Activated B cell treated with CpG ODN at 0.5 μM for 24 hours (primary cell): ENCODE measurements at regions of chr1 and their contacts with region 1.

Region 1: GRCh38 chr1:11681071-11681771 is at the start of gene MAD2L2:
- DNase-seq: peak; percentile 93
- ATAC-seq: peak; percentile 90
- H3K4me3 Mint-ChIP-seq: peak within 1 kb of the TSS; percentile 92
- H3K27ac Mint-ChIP-seq: peak within 1 kb of the TSS; percentile 88
- H3K4me1 Mint-ChIP-seq: peaks cover 22% of the 10 kb centered on the region
- H3K27me3 Mint-ChIP-seq: no peaks in the 10 kb centered on the region
- CTCF ChIP-seq: no peak
- total RNA-seq, gene MAD2L2: 34.4 and 34.9 TPM in 2 replicates

Region 2: GRCh38 chr1:11272832-11273594 is 408.2 kb before region 1 on chr1 and contains the start of gene UBIAD1:
- CTCF ChIA-PET with region 1: no interaction called
- POLR2A ChIA-PET with region 1: no interaction called
- intact Hi-C with region 1: loop called (anchors 2 kb)
- DNase-seq: peak; percentile 80
- ATAC-seq: peak; percentile 86
- H3K4me3 Mint-ChIP-seq: peak within 1 kb of the TSS; percentile 93
- H3K27ac Mint-ChIP-seq: peak within 1 kb of the TSS; percentile 96
- H3K4me1 Mint-ChIP-seq: peaks cover 35% of the 10 kb centered on the region
- H3K27me3 Mint-ChIP-seq: no peaks in the 10 kb centered on the region
- CTCF ChIP-seq: no peak
- total RNA-seq, gene UBIAD1: 23.3 and 27.8 TPM in 2 replicates

Region 3: DNA sequence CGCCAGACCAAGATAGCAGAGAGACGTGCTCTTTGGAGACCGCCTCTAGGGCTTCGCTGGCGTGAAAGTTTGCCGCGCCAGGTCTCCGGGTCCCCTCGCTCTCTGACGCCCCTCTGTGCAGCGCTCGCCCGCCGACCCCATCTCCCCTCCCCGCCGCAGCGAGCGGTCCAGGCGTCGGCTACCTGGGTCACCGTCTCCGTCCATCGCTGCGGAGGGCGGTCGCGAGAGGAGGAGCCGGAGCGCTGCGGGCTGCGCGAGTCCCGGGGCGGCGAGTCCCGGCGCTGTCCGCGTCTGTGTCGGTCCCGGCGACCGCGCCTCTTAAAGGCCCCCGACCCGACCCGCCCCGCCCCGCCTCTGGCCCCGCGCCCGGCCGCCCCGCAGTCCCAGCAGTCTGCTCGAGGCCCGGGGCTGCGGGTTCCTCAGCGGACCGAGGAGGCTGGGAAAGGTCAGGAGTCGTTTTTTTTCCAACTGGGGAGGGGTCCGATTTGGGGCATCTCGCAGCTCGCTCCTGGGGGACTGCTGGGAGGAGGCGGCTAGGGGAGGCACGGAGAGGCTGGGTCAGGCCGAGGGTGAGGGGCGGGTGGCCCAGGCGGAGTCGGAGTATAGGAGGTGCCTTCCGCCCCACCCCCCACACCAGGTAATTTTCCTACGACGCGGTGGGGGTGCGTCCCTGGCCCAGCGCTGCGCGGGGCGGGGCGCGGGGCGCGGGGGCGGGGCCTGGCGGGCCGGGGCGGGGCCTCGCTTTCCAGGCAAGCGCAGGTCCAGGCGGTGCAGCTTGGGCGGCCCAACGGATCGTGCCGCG is 26.9 kb before region 1 on chr1 and contains the starts of genes FBXO2 and FBXO44:
- CTCF ChIA-PET with region 1: no interaction called
- POLR2A ChIA-PET with region 1: interaction called, 8 read pairs
- intact Hi-C with region 1: loop called (anchors 1 kb)
- DNase-seq: peak; percentile 60
- ATAC-seq: peak; percentile 85
- H3K4me3 Mint-ChIP-seq: peak within 1 kb of the TSS; percentile 80
- H3K27ac Mint-ChIP-seq: no peak within 1 kb of the TSS
- H3K4me1 Mint-ChIP-seq: peaks cover 29% of the 10 kb centered on the region
- H3K27me3 Mint-ChIP-seq: no peaks in the 10 kb centered on the region
- CTCF ChIP-seq: no peak
- total RNA-seq, gene FBXO2: 4.2 and 4.6 TPM in 2 replicates
- total RNA-seq, gene FBXO44: 27.2 and 29.9 TPM in 2 replicates

Region 4: GRCh38 chr1:11661103-11661502 is 20.1 kb before region 1 on chr1:
- CTCF ChIA-PET with region 1: interaction called, 12 read pairs
- POLR2A ChIA-PET with region 1: interaction called, 34 read pairs
- intact Hi-C with region 1: loop called (anchors 1 kb)
- DNase-seq: no peak
- ATAC-seq: no peak
- H3K4me3 Mint-ChIP-seq: no peak overlapping the region
- H3K27ac Mint-ChIP-seq: no peak overlapping the region
- H3K4me1 Mint-ChIP-seq: no peaks in the 10 kb centered on the region
- H3K27me3 Mint-ChIP-seq: no peaks in the 10 kb centered on the region
- CTCF ChIP-seq: no peak

Region 5: DNA sequence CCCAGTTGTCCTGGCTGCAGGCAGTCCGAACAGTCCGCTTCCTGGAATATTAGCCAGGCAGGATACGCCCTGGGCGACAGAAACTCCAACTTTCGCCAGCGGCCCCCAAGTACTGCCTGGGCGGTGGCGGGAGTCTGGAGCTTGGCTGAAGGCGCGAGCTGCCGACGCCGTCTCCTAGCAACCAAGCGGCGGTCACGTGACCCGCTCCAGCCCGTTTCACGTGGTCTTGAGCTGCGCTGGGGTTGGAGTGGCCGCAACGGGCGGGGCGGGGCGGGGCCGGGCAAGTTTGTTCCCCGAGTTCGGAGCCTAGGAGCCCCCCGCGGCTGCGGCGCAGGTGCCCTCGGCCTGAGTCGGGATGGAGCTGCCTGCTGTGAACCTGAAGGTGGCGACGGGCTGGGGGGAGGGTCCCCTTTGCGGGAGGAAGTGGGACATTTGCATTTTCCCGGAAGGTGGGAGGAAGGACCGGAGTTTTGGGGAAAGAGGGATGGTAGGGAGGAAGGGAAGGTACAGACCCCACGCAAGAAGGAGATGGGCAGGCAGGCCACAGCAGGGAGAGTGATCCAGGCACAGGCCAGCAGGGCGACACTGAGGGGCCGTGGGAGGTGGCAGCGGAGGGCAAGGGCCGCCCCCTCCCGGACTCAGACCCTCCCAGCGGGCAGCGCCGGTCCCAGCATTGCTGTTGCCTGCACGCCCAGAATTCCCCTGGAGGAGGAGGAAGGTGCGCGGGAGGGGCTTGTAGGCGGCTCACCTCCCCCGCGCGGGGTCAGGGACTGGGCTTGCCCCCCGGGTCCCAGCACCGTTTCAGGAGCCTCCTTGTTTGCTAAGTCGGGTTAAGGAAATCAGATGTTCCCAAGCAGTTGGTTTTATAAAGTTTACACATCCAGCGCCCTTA is 54.9 kb after region 1 on chr1 and contains the start of gene AGTRAP:
- CTCF ChIA-PET with region 1: no interaction called
- POLR2A ChIA-PET with region 1: interaction called, 5 read pairs
- intact Hi-C with region 1: loop called (anchors 2 kb)
- DNase-seq: peak; percentile 80
- ATAC-seq: peak; percentile 88
- H3K4me3 Mint-ChIP-seq: peak within 1 kb of the TSS; percentile 93
- H3K27ac Mint-ChIP-seq: peak within 1 kb of the TSS; percentile 79
- H3K4me1 Mint-ChIP-seq: peaks cover 40% of the 10 kb centered on the region
- H3K27me3 Mint-ChIP-seq: no peaks in the 10 kb centered on the region
- CTCF ChIP-seq: no peak
- total RNA-seq, gene AGTRAP: 10.9 and 13.9 TPM in 2 replicates

Region 6: GRCh38 chr1:11979028-11979850 is 298.0 kb after region 1 on chr1:
- CTCF ChIA-PET with region 1: no interaction called
- POLR2A ChIA-PET with region 1: no interaction called
- intact Hi-C with region 1: no loop called
- DNase-seq: no peak
- ATAC-seq: no peak
- H3K4me3 Mint-ChIP-seq: peak overlapping the region; percentile 90
- H3K27ac Mint-ChIP-seq: peak overlapping the region; percentile 84
- H3K4me1 Mint-ChIP-seq: peaks cover 34% of the 10 kb centered on the region
- H3K27me3 Mint-ChIP-seq: no peaks in the 10 kb centered on the region
- CTCF ChIP-seq: no peak

Region 7: GRCh38 chr1:12244078-12244477 is 562.9 kb after region 1 on chr1:
- CTCF ChIA-PET with region 1: no interaction called
- POLR2A ChIA-PET with region 1: no interaction called
- intact Hi-C with region 1: no loop called
- DNase-seq: no peak
- ATAC-seq: no peak
- H3K4me3 Mint-ChIP-seq: no peak overlapping the region
- H3K27ac Mint-ChIP-seq: no peak overlapping the region
- H3K4me1 Mint-ChIP-seq: no peaks in the 10 kb centered on the region
- H3K27me3 Mint-ChIP-seq: no peaks in the 10 kb centered on the region
- CTCF ChIP-seq: no peak